ENCODE measurements at regions of chr7 and their contacts with region 1.

Region 1: GRCh38 chr7:28626624-28627262 is 214.4 kb downstream of the CREB5 start:
- DNase-seq: peak; percentile 40
- ATAC-seq: peak; percentile 80
- H3K4me3 ChIP-seq: no peak overlapping the region
- H3K27ac ChIP-seq: no peak overlapping the region
- H3K4me1 ChIP-seq: peaks cover 3 to 4% of the 10 kb centered on the region in 2 experiments; a peak in 2 of 4 replicates
- H3K27me3 ChIP-seq: peaks cover 23% of the 10 kb centered on the region
- CTCF ChIP-seq: peak; percentile 48 to 79 (median 77); a peak in 5 of 6 replicates
- POLR2A ChIP-seq: no peak
- RAD21 ChIP-seq: peak; percentile 54

Region 2: DNA sequence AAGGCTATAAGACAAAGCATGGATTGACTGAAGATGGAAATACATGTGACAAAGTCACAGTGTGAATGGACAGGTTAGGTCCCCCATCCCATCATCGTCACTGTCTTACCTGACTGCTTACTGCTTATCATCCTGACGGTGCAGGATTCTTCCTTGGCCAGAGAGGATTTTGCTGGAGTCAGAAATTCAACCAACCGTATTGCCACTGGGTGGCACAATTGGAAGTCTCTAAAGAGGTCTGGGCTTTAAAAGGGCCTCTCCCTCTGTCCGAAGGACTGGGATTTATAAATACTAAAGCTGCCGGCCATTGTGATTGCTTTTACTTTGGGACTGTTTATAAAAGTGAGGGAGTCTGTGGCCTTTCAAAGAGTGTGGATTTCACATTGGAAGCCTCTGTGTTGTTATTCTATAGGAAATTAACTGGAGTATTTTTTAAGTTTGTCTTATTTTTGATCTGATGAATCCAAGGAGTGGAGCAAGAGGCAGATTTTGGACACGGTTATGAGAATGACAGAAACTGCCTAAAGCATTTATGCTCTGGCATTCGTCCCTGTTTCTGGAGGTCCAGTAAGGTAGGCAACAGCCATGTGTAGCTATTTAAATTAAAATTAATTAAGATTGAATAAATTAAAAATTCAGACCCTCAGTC is 327.7 kb before region 1 on chr7:
- CTCF ChIA-PET with region 1: interaction called, 6 read pairs
- POLR2A ChIA-PET with region 1: no interaction called
- RAD21 ChIA-PET with region 1: no interaction called
- intact Hi-C with region 1: loop called (anchors 1 kb)
- DNase-seq: peak; percentile 48
- ATAC-seq: peak; percentile 89
- H3K4me3 ChIP-seq: no peak overlapping the region
- H3K27ac ChIP-seq: no peak overlapping the region
- H3K4me1 ChIP-seq: peaks cover 0 to 3% of the 10 kb centered on the region in 2 experiments; a peak in 2 of 4 replicates
- H3K27me3 ChIP-seq: no peaks in the 10 kb centered on the region
- CTCF ChIP-seq: peak; percentile 56 to 64 (median 59)
- POLR2A ChIP-seq: no peak
- RAD21 ChIP-seq: peak; percentile 74

Region 3: DNA sequence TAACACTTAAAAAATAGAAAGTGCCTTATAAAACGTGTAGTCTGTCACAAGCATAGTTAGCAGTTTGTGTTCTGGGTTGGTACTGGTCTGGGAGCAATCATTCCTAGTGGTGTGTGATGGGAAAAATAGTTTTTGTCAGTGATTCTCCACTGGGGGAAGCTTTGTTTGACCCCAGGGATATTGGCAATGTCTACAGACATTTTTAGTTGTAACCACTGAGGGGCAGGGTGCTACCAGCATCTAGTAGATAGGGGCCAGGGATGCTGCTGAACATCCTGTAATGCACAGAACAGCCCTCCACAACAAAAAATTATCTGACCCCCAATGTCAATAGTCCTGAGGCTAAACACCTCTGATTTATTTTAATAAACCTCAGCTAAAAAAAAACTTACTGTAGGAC is 266.0 kb before region 1 on chr7:
- CTCF ChIA-PET with region 1: no interaction called
- POLR2A ChIA-PET with region 1: no interaction called
- RAD21 ChIA-PET with region 1: no interaction called
- intact Hi-C with region 1: loop called (anchors 1 kb)
- DNase-seq: no peak
- ATAC-seq: peak; percentile 62
- H3K4me3 ChIP-seq: no peak overlapping the region
- H3K27ac ChIP-seq: no peak overlapping the region
- H3K4me1 ChIP-seq: peaks cover 3 to 12% of the 10 kb centered on the region in 2 experiments; a peak in 3 of 4 replicates
- H3K27me3 ChIP-seq: no peaks in the 10 kb centered on the region
- CTCF ChIP-seq: peak; percentile 7 to 31 (median 14); a peak in 2 of 6 replicates
- POLR2A ChIP-seq: no peak
- RAD21 ChIP-seq: peak; percentile 35

Region 4: DNA sequence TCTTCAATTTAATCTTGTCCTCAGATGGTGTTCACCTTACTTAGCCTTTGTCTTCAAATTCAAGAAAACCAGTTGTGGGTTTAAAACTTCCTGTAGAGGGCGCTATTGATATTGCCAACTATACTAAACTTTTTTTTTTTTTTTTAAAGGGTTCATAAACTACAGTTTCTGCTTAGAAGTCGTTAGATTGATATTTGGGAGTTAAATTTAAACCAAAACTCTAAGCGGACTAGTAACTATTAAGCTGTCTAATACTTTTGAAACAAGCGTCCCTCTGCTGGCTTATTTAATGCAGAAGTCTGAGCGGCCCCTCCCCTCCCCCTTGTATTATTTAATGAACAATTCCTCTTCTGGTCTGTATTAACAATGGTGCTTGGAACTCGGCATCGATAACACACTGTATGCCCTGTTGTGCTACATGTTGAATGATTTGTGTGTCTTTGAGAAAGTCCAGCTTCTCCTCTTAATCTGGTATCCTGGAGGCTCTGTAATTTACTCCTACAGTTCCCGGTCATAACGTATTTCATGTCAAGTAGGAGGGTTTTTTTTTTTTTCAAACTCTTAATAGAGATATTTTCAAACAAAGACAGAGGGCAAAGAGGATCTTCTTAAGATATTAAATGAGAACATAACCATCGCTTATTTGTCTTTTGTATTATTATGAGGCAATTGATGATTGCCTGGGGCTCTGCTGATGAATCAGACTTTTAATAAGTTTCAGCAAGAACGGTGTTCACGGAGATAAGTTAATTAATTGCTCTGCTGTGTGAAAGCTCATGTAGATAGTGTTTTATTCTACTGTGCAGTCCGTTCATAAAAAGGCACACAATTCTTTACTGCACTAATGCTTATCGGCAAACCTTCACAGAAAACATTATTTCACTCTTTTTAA is 237.0 kb before region 1 on chr7:
- CTCF ChIA-PET with region 1: no interaction called
- POLR2A ChIA-PET with region 1: no interaction called
- RAD21 ChIA-PET with region 1: no interaction called
- intact Hi-C with region 1: loop called (anchors 1 kb)
- DNase-seq: peak; percentile 49
- ATAC-seq: peak; percentile 77
- H3K4me3 ChIP-seq: peak overlapping the region; percentile 7 to 21; a peak in 3 of 4 replicates
- H3K27ac ChIP-seq: no peak overlapping the region
- H3K4me1 ChIP-seq: no peaks in the 10 kb centered on the region
- H3K27me3 ChIP-seq: no peaks in the 10 kb centered on the region
- CTCF ChIP-seq: peak; percentile 60 to 91 (median 62)
- POLR2A ChIP-seq: no peak
- RAD21 ChIP-seq: peak; percentile 65